AG04450 (cell line): ENCODE measurements at regions of chr22 and their contacts with region 1.

Region 1: DNA sequence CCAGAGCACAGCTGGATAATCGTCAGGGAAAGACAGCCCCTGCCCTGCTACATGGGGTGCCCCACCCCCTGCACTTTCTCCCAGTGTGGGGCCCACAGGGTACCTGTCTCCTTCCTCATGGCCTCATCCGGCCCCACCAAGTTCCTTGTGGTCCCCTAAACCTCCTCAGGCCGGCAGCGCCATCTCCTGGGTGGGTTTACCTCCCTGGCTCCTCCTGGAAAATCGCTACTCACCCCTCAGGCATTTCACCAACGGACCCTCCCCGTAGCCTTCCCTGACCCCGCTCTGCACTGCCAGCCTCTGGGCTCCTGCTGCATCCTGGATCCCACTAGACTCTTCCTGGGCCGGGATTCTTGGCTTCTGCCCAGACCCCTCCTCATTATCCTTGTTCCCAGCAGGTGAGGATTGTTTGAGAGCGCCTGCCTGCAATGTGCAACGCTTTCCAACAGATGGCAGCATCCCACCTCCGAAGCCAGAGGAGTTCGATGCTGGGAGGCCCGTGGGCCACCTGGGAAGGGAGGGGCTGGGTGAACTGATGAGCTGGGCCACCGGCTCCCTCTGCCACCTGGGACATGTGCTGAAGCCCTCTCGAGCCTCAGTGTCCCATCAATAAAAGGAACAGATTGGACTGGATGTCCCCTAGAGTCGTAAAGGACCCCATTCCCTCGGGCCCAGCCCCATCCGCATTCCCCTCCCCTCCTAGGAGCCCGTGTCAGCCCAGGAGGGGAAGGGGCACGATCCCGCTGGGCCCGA is 44.2 kb upstream of the TTLL12 start:
- DNase-seq: no peak
- H3K4me3 ChIP-seq: no peak overlapping the region
- H3K27ac ChIP-seq: no peak overlapping the region
- H3K27me3 ChIP-seq: peaks cover 36% of the 10 kb centered on the region
- CTCF ChIP-seq: peak; percentile 88

Region 2: DNA sequence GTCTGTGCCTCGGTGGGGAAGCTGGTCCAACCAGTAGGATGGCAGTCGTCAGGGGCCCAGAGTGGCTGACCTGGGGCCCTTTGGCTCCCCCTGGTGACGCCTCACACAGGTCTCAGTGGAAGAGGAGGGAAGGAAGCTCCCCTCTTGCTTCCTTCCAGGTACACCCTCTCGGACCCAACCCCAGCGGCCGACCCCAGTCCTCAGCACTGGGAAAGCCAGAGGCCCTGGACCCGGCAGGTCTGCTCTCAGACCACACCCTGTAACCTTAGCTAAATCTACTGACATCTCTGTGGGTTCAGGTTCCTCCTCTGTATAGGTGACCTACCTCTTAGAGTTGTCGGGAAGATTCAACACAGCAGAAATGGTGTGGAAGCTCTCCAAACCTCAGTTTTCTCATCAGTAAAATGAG is 115.4 kb after region 1 on chr22:
- CTCF ChIA-PET with region 1: interaction called, 31 read pairs
- POLR2A ChIA-PET with region 1: no interaction called
- DNase-seq: no peak
- H3K4me3 ChIP-seq: no peak overlapping the region
- H3K27ac ChIP-seq: no peak overlapping the region
- H3K27me3 ChIP-seq: peaks cover 30% of the 10 kb centered on the region
- CTCF ChIP-seq: peak; percentile 67

Region 3: GRCh38 chr22:43385770-43386641 is 154.9 kb after region 1 on chr22:
- CTCF ChIA-PET with region 1: interaction called, 30 read pairs
- POLR2A ChIA-PET with region 1: no interaction called
- DNase-seq: peak; percentile 36
- H3K4me3 ChIP-seq: no peak overlapping the region
- H3K27ac ChIP-seq: no peak overlapping the region
- H3K27me3 ChIP-seq: peaks cover 4% of the 10 kb centered on the region
- CTCF ChIP-seq: peak; percentile 95